Left ventricle myocardium superior (tissue), 1 donor: ENCODE measurements at regions of chr18 and their contacts with region 1.

Region 1: GRCh38 chr18:48540251-48541025 is 1.6 kb downstream of the CTIF start:
- DNase-seq: peak; percentile 83
- ATAC-seq: peak; percentile 72

Region 2: DNA sequence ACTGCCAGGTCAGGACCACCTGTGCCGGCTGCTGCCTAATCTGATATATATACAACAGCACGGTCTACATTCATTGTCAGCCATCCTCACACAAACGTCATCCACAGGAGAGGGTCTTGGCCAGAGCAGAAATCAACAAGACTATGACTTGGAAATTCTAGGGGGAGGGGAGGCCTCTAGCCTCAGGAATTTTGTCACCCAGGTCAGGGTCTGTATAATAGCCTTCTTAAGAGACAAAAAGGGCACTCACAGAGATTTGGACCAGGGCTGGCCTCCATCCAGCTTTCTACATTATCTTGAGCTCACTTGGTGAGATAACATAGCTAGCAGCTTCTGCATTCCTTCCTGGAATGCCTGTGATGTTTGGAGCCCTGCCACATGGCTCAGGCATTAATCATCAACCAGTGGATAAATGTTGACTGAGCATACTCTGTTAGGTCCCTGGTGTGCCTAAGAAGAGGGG is 52.0 kb before region 1 on chr18:
- intact Hi-C with region 1: loop called (anchors 10 kb)
- DNase-seq: peak; percentile 81
- ATAC-seq: peak; percentile 95

Region 3: DNA sequence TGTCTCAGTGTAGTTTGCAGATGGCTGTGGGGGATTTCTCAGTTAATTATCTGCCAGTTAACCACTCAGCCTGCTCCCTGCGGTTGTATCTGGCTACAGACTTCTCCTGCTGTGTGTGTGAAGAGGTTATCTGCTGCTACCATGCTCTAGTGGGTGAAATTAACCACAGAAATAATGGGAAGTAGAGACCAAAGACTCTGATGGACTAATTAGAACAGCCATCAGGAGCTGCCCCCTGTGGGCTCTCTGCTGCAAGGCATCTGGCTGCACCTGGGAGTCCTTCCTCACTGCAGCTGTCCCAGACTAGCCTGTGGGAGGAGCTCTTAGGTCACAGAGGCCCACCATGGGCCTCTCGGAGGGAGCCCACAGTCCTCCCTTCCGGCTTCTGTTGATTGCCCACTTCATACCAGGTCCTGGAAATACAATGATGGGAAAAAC is 65.0 kb after region 1 on chr18:
- intact Hi-C with region 1: loop called (anchors 10 kb)
- DNase-seq: no peak
- ATAC-seq: no peak

Region 4: GRCh38 chr18:48622911-48623431 is 82.5 kb after region 1 on chr18:
- intact Hi-C with region 1: no loop called
- DNase-seq: no peak
- ATAC-seq: no peak